Naive thymus-derived CD4-positive, alpha-beta T cell (primary cell): ENCODE measurements at regions of chr2 and their contacts with region 1.

Region 1: GRCh38 chr2:73926493-73927338 is at the start of gene DGUOK:
- DNase-seq: peak; percentile 81 to 99 (median 98)
- ATAC-seq: peak; percentile 99
- H3K4me3 ChIP-seq: peak within 1 kb of the TSS; percentile 87
- H3K4me3 Mint-ChIP-seq: peak within 1 kb of the TSS; percentile 80 to 97 (median 92)
- H3K27ac ChIP-seq: peak within 1 kb of the TSS; percentile 98
- H3K27ac Mint-ChIP-seq: peak within 1 kb of the TSS; percentile 79 to 99 (median 98)
- H3K4me1 ChIP-seq: peaks cover 37 to 41% of the 10 kb centered on the region in 2 donors
- H3K4me1 Mint-ChIP-seq: peaks cover 35 to 57% (median 52%) of the 10 kb centered on the region in 7 donors
- H3K27me3 ChIP-seq: no peaks in the 10 kb centered on the region
- H3K27me3 Mint-ChIP-seq: no peaks in the 10 kb centered on the region
- total RNA-seq, gene DGUOK: 43.1 to 73.9 (median 65.8) TPM

Region 2: DNA sequence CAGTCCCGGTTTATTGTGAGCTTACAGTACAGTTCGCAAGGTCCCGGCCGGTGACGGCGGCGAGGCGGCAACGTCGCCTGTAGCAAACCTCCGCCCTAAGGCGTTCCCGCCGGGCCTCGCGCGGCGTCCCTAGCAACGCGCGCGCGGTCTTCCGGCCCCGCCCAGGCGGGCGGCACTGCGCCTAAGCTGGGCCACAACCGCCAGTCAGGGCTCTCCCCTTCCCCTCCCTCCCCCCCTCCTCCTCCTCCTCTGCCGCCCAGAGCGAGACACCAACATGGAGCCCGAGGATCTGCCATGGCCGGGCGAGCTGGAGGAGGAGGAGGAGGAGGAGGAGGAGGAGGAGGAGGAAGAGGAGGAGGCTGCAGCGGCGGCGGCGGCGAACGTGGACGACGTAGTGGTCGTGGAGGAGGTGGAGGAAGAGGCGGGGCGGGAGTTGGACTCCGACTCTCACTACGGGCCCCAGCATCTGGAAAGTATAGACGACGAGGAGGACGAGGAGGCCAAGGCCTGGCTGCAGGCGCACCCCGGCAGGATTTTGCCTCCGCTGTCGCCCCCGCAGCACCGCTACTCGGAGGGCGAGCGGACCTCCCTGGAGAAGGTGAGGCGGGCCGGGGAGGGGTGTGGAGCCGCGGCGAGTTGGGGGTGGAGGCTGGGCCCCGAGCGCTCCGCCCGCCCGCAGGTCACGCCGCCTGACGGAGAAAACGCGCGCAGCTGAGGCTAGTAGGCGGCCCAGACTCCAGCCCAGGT is 540.9 kb before region 1 on chr2 and contains the start of gene ALMS1:
- CTCF ChIA-PET with region 1: no interaction called
- POLR2A ChIA-PET with region 1: no interaction called
- intact Hi-C with region 1: loop called in 1 of 2 experiments (anchors 5 kb)
- DNase-seq: peak; percentile 80 to 91 (median 87)
- ATAC-seq: peak; percentile 94
- H3K4me3 ChIP-seq: peak within 1 kb of the TSS; percentile 85
- H3K4me3 Mint-ChIP-seq: peak within 1 kb of the TSS; percentile 81 to 96 (median 90)
- H3K27ac ChIP-seq: peak within 1 kb of the TSS; percentile 92
- H3K27ac Mint-ChIP-seq: peak within 1 kb of the TSS; percentile 93 to 98 (median 96)
- H3K4me1 ChIP-seq: peaks cover 4 to 18% of the 10 kb centered on the region in 2 donors
- H3K4me1 Mint-ChIP-seq: peaks cover 23 to 47% (median 44%) of the 10 kb centered on the region in 7 donors
- H3K27me3 ChIP-seq: no peaks in the 10 kb centered on the region
- H3K27me3 Mint-ChIP-seq: peaks cover 0 to 23% (median 0%) of the 10 kb centered on the region in 5 donors
- total RNA-seq, gene ALMS1: 16.3 to 46.7 (median 23.5) TPM

Region 3: DNA sequence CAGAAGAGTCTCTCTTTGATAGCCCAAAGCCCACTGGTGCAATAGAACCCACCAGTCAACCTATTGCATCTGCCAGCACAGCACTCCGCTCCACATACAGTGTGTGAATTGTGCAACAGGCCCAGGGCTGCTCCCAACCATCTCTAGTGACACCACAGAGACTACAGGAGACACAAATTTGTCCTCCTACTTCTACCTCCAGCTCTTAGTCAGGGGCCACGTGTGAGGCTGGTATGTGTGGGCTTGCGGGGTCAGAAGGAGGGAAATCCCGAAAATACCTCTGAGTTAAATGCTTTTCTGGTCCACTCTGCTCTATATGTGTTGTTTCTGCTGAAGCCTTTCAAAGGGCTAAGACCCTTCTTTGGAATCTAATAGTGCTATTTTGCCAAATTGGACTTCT is 18.0 kb after region 1 on chr2:
- CTCF ChIA-PET with region 1: no interaction called
- POLR2A ChIA-PET with region 1: interaction called, 4 read pairs
- intact Hi-C with region 1: loop called in 1 of 2 experiments (anchors 2 kb)
- DNase-seq: no peak
- ATAC-seq: no peak
- H3K4me3 ChIP-seq: no peak overlapping the region
- H3K4me3 Mint-ChIP-seq: peak overlapping the region in 2 of 10 donors; percentile 4 to 46
- H3K27ac ChIP-seq: peak overlapping the region; percentile 34
- H3K27ac Mint-ChIP-seq: peak overlapping the region in 8 of 9 donors; percentile 20 to 96 (median 62)
- H3K4me1 ChIP-seq: peaks cover 0 to 59% of the 10 kb centered on the region in 2 donors
- H3K4me1 Mint-ChIP-seq: peaks cover 47 to 97% (median 84%) of the 10 kb centered on the region in 7 donors
- H3K27me3 ChIP-seq: no peaks in the 10 kb centered on the region
- H3K27me3 Mint-ChIP-seq: no peaks in the 10 kb centered on the region

Region 4: DNA sequence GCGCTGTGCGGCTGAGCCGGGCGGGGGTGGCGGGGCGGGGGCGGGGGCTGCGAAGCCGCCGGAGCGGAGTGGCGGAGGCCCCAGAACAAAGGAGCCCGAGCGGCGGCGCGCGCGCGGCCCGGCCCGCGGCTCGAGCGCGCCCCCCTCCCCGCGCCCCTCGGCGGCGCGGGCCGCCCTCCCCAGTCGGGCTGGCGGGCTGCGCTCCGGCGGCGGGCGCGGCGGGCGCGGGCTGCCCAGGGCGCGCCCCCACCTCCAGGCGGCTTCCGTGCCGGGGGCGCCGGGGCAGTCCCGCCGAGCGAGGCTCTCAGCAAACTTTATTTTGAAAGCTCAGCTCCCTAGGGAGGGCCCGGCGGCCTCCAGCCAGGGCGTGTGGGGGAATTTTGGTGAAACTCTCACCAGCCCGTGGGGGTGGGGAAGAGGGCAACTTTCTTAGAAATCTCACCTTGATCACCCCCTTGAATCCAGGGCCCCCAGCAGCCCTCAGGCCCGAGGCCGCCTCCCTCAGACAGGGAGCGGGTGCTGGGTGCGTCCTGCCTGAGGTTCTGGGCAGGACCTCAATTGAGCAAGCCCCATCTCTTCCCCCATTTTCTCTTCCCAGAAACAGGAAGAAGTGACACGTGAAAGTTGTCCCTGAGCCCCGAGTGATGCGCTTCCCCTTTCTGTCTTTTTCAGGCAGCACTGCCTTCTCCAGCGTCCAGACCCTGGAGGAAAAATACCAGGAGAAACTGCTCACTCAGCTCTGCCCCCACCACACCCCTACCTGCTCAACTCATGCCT is 58.8 kb after region 1 on chr2:
- CTCF ChIA-PET with region 1: interaction called, 3 read pairs
- POLR2A ChIA-PET with region 1: interaction called, 5 read pairs
- intact Hi-C with region 1: loop called (anchors 1 to 2 kb)
- DNase-seq: peak in 8 of 9 donors; percentile 43 to 78 (median 52)
- ATAC-seq: peak; percentile 63
- H3K4me3 ChIP-seq: peak overlapping the region; percentile 62
- H3K4me3 Mint-ChIP-seq: peak overlapping the region; percentile 83 to 93 (median 88)
- H3K27ac ChIP-seq: peak overlapping the region; percentile 90
- H3K27ac Mint-ChIP-seq: peak overlapping the region; percentile 66 to 94 (median 87)
- H3K4me1 ChIP-seq: peaks cover 40 to 63% of the 10 kb centered on the region in 2 donors
- H3K4me1 Mint-ChIP-seq: peaks cover 64 to 85% (median 81%) of the 10 kb centered on the region in 7 donors
- H3K27me3 ChIP-seq: no peaks in the 10 kb centered on the region
- H3K27me3 Mint-ChIP-seq: peaks cover 0 to 28% (median 0%) of the 10 kb centered on the region in 5 donors

Region 5: DNA sequence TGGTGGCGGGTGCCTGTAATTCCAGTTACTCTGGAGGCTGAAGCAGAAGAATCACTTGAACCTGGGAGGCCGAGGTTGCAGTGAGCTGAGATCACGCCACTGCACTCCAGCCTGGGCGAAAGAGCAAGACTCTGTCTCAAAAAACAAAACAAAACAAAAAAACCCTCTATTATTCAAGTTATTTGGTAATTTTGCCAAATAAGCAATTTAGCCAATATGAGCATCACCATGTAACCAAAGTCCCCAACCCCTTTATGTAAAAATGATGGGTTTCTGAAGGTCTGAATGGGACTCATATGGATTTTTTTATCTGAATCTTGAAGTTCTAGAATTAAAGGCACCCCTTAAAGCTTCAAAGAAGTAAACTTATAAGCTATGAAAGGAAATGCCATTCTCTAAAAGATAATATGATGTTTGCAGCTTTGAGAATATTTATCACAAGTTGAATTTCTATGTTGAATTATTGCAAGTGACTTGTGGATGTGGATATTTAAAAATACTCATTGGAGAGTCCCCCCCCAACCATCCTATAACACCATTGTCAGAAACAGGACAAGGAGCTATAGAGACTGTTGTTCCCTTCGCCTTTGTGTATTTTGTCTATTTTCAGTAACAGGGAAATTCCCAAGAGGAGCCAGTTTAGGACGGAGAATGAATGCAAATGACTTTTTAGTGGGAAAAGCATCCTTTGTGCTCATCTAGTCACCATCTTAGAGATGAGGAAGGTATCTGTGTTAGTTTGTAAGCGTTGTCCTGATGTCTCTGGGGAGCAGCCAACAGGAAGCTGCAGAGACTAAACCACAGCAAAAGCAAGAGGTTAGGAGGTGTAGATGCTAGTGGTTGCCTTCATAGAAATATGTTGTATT is 126.2 kb after region 1 on chr2:
- CTCF ChIA-PET with region 1: no interaction called
- POLR2A ChIA-PET with region 1: no interaction called
- intact Hi-C with region 1: no loop called
- DNase-seq: peak in 7 of 9 donors; percentile 42 to 72 (median 60)
- ATAC-seq: peak; percentile 90
- H3K4me3 ChIP-seq: peak overlapping the region; percentile 31
- H3K4me3 Mint-ChIP-seq: peak overlapping the region; percentile 53 to 76 (median 68)
- H3K27ac ChIP-seq: peak overlapping the region; percentile 17
- H3K27ac Mint-ChIP-seq: peak overlapping the region; percentile 47 to 93 (median 87)
- H3K4me1 ChIP-seq: peaks cover 17 to 20% of the 10 kb centered on the region in 2 donors
- H3K4me1 Mint-ChIP-seq: peaks cover 33 to 85% (median 57%) of the 10 kb centered on the region in 7 donors
- H3K27me3 ChIP-seq: no peaks in the 10 kb centered on the region
- H3K27me3 Mint-ChIP-seq: no peaks in the 10 kb centered on the region

Region 6: GRCh38 chr2:74147727-74148456 is 221.2 kb after region 1 on chr2 and contains the start of gene BOLA3:
- CTCF ChIA-PET with region 1: no interaction called
- POLR2A ChIA-PET with region 1: no interaction called
- intact Hi-C with region 1: loop called (anchors 1 to 2 kb)
- DNase-seq: peak; percentile 55 to 93 (median 70)
- ATAC-seq: peak; percentile 95
- H3K4me3 ChIP-seq: peak within 1 kb of the TSS; percentile 72
- H3K4me3 Mint-ChIP-seq: no peak within 1 kb of the TSS
- H3K27ac ChIP-seq: peak within 1 kb of the TSS; percentile 72
- H3K27ac Mint-ChIP-seq: no peak within 1 kb of the TSS
- H3K4me1 ChIP-seq: peaks cover 14 to 15% of the 10 kb centered on the region in 2 donors
- H3K4me1 Mint-ChIP-seq: peaks cover 0 to 15% (median 0%) of the 10 kb centered on the region in 7 donors
- H3K27me3 ChIP-seq: no peaks in the 10 kb centered on the region
- H3K27me3 Mint-ChIP-seq: no peaks in the 10 kb centered on the region
- total RNA-seq, gene BOLA3: 6.9 to 54.8 (median 13.7) TPM

Region 7: GRCh38 chr2:74391580-74392448 is 465.1 kb after region 1 on chr2:
- CTCF ChIA-PET with region 1: no interaction called
- POLR2A ChIA-PET with region 1: no interaction called
- intact Hi-C with region 1: loop called in 1 of 2 experiments (anchors 2 kb)
- DNase-seq: peak; percentile 89 to 99 (median 93)
- ATAC-seq: peak; percentile 97
- H3K4me3 ChIP-seq: peak overlapping the region; percentile 78
- H3K4me3 Mint-ChIP-seq: peak overlapping the region in 4 of 10 donors; percentile 40 to 100 (median 92)
- H3K27ac ChIP-seq: peak overlapping the region; percentile 91
- H3K27ac Mint-ChIP-seq: peak overlapping the region in 8 of 9 donors; percentile 98 to 100 (median 99)
- H3K4me1 ChIP-seq: peaks cover 8 to 25% of the 10 kb centered on the region in 2 donors
- H3K4me1 Mint-ChIP-seq: peaks cover 0 to 15% (median 5%) of the 10 kb centered on the region in 7 donors
- H3K27me3 ChIP-seq: no peaks in the 10 kb centered on the region
- H3K27me3 Mint-ChIP-seq: peaks cover 0 to 14% (median 5%) of the 10 kb centered on the region in 5 donors

Region 8: DNA sequence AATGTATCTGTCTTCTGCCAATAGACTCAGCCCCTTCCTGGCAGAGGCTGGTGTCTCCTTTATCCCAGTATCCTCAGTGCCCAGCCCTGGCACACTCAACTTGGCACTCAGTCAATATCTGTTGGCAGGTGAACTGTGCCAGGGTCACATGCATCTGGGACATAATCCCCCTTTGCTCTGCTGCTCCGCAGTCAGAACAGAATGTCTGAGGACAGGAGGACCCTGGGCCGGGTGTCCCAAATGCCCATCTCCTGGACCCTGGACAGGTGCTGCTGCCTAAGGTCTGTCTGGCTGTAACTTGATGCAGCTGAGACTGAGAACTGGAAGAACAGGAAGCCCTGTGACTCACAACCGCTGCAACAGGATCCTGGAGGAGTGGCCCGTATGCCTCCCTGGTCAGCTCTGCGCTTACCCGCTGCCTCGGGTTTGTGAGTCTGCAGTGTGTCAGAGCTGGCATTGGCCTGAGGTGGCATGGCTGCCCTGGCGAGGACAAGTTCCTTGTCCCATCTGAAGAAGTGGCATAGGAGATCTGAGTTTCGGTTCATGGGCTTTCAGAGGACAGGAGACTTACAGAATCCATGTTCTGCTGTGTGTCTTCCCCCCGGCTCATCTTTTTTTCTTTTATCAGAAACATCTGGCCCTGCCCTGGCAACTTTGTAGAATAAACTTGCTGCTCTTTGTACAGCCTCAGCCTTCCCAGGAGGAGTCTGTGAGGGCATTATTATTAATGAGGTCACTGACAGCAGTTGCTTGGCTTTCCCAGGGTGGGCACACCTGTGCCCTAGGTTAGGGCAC is 918.7 kb after region 1 on chr2:
- CTCF ChIA-PET with region 1: no interaction called
- POLR2A ChIA-PET with region 1: no interaction called
- intact Hi-C with region 1: loop called in 1 of 2 experiments (anchors 10 kb)
- DNase-seq: peak in 2 of 9 donors; percentile 23 to 51
- ATAC-seq: peak; percentile 70
- H3K4me3 ChIP-seq: peak overlapping the region; percentile 29
- H3K4me3 Mint-ChIP-seq: peak overlapping the region; percentile 65 to 87 (median 78)
- H3K27ac ChIP-seq: peak overlapping the region; percentile 39
- H3K27ac Mint-ChIP-seq: peak overlapping the region; percentile 85 to 99 (median 94)
- H3K4me1 ChIP-seq: peaks cover 37 to 97% of the 10 kb centered on the region in 2 donors
- H3K4me1 Mint-ChIP-seq: peaks cover 75 to 100% (median 97%) of the 10 kb centered on the region in 7 donors
- H3K27me3 ChIP-seq: no peaks in the 10 kb centered on the region
- H3K27me3 Mint-ChIP-seq: no peaks in the 10 kb centered on the region